ENCODE measurements at regions of chr22 and their contacts with region 1.

Region 1: GRCh38 chr22:20957316-20958101 is 9.5 kb upstream of the AIFM3 start:
- DNase-seq: no peak
- ATAC-seq: peak in 1 of 2 donors; percentile 9
- H3K4me3 ChIP-seq: peak overlapping the region; percentile 58 to 77 (median 66)
- H3K27ac ChIP-seq: peak overlapping the region in 1 of 4 donors; percentile 6
- H3K4me1 ChIP-seq: peaks cover 45% of the 10 kb centered on the region in 2 donors
- H3K27me3 ChIP-seq: no peaks in the 10 kb centered on the region
- CTCF ChIP-seq: no peak
- POLR2A ChIP-seq: no peak

Region 2: GRCh38 chr22:20885557-20886323 is 71.8 kb before region 1 on chr22:
- in situ Hi-C with region 1: no loop called
- intact Hi-C with region 1: loop called (anchors 10 kb)
- DNase-seq: peak; percentile 68 to 71
- ATAC-seq: peak; percentile 93 to 97
- H3K4me3 ChIP-seq: no peak overlapping the region
- H3K27ac ChIP-seq: peak overlapping the region in 3 of 4 donors; percentile 39 to 46 (median 41)
- H3K4me1 ChIP-seq: no peaks in the 10 kb centered on the region
- H3K27me3 ChIP-seq: no peaks in the 10 kb centered on the region
- CTCF ChIP-seq: peak; percentile 59 to 85 (median 77)
- POLR2A ChIP-seq: no peak